A549 (cell line): ENCODE measurements at regions of chr2 and their contacts with region 1.

Region 1: GRCh38 chr2:86147793-86148192 is 41.8 kb downstream of the PTCD3 start:
- DNase-seq: no peak
- ATAC-seq: no peak
- H3K4me3 ChIP-seq: no peak overlapping the region
- H3K27ac ChIP-seq: no peak overlapping the region
- H3K4me1 ChIP-seq: no peaks in the 10 kb centered on the region
- CTCF ChIP-seq: no peak
- EP300 ChIP-seq: no peak
- POLR2A ChIP-seq: no peak
- RAD21 ChIP-seq: no peak

Region 2: DNA sequence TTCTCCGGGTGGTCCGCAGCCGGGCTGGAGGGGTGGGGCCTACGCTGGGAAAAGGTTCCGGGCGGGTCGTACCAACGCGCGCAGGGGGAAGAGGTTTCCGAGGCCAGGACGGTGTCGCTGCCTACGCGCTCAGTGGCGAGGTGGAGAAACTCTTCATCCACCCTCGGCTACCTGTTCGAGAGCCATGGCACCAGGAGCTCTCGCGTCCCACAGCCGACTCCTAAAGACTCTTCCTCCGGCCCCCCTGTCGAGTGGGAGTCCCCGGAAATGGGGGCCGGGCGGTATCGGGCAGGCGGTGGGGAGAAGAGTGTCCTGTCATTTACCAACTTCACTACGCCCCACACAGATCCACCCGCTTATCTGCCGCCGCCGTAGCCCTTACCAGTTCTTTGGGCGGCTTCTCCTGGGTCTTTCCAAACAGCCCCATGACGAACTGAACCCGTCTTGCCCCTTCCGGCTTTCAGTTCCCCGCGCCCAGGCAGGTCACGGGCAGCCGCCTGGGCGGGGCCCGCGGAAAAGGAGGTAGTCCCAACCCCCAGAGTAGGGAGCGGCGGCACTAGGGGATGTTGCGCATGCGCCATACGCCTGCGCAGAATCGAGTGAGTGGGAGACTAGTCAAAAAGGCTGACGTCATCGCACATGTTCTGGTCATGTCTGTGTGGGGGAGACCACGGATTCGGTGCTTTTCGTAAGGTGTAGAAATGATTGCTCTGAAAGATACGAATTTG is 415.3 kb after region 1 on chr2 and contains the start of gene CHMP3:
- CTCF ChIA-PET with region 1: no interaction called
- POLR2A ChIA-PET with region 1: interaction called, 10 read pairs
- DNase-seq: peak; percentile 98
- ATAC-seq: peak; percentile 92 to 95
- H3K4me3 ChIP-seq: peak within 1 kb of the TSS; percentile 56
- H3K27ac ChIP-seq: peak within 1 kb of the TSS; percentile 94 to 96
- H3K4me1 ChIP-seq: peaks cover 29% of the 10 kb centered on the region
- CTCF ChIP-seq: no peak
- EP300 ChIP-seq: no peak
- POLR2A ChIP-seq: peak; percentile 57
- RAD21 ChIP-seq: no peak; a peak in 1 of 5 replicates
- polyA plus RNA-seq, gene CHMP3: 175 and 246 TPM in 2 replicates